ENCODE measurements at regions of chr21 and their contacts with region 1.

Region 1: DNA sequence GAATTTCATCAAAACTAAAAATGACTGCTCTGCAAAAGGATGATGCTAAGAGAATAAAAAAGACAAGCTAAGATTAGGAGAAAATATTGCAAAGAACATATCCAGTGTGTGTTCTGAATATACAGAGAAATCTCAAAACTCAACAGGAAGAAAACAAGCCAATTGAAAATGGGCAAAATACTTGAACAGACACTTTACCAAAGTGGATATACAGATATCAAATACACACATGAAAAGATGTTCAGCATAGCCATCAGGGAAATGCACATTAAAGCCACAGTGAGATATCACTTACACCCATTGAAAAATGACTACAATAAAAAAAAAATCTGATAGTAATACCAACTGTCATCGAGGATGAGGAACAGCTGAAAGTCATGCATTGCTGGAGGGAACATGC is 21.3 kb downstream of the PRMT2 start:
- DNase-seq: no peak
- ATAC-seq: no peak
- H3K4me3 Mint-ChIP-seq: no peak overlapping the region
- H3K27ac Mint-ChIP-seq: peak overlapping the region in 7 of 10 donors; percentile 1 to 58 (median 51)
- H3K4me1 Mint-ChIP-seq: peaks cover 26 to 61% (median 43%) of the 10 kb centered on the region in 4 donors
- H3K27me3 Mint-ChIP-seq: no peaks in the 10 kb centered on the region

Region 2: GRCh38 chr21:46607636-46608035 is 49.2 kb before region 1 on chr21:
- POLR2A ChIA-PET with region 1: no interaction called
- DNase-seq: no peak
- ATAC-seq: no peak
- H3K4me3 Mint-ChIP-seq: peak overlapping the region in 1 of 10 donors; percentile 16
- H3K27ac Mint-ChIP-seq: peak overlapping the region in 8 of 10 donors; percentile 3 to 95 (median 86)
- H3K4me1 Mint-ChIP-seq: peaks cover 24 to 67% (median 51%) of the 10 kb centered on the region in 4 donors
- H3K27me3 Mint-ChIP-seq: no peaks in the 10 kb centered on the region

Region 3: GRCh38 chr21:46667741-46668380 is 11.0 kb after region 1 on chr21:
- POLR2A ChIA-PET with region 1: interaction called, 10 read pairs
- DNase-seq: no peak
- ATAC-seq: peak; percentile 42 to 65
- H3K4me3 Mint-ChIP-seq: peak overlapping the region; percentile 78 to 90 (median 84)
- H3K27ac Mint-ChIP-seq: peak overlapping the region in 7 of 10 donors; percentile 5 to 78 (median 60)
- H3K4me1 Mint-ChIP-seq: peaks cover 7 to 27% (median 8%) of the 10 kb centered on the region in 4 donors
- H3K27me3 Mint-ChIP-seq: peaks cover 0 to 3% (median 0%) of the 10 kb centered on the region in 5 donors